MCF 10A (cell line): ENCODE measurements at regions of chr1 and their contacts with region 1.

Region 1: DNA sequence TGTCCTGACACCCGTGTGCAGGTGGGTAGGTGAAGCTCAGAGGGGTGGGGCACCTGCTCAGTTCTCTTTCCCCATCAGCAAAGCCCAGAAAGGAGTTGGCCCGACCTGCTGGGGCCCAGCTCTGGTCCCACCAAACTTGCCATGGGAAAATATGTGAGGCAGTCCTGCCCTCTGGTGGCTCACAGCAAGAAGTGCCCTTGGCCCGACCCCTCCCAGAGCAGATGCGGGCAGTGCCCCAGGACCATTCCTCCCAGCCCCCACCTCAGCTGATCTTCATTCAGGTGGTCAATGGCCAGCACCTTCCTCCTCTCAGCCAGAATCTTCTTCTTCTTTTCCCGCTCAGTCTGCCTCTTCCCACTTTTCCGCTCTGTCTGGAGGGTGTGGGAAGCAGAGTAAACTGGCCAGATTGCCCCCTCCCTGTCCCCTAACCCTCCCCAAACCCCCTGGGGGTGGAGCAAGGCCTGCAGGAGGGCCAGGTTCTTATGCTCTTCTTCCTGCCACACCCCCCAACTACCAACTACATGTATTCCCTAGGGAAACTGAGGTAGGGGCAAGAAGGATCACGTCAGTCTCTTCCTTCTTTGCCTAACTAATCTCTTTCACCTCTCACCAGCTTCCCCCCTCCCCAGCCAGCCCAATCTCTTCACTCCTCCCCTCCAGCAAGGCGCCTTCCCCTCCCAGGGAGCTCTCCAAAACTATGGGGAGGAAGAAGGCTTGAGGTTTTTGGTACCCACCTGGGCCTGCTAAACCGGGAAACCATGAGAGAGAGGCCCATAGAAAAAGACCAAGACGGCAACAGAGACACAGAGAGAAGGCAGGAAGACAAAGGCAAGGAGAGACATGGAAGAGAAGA is 15.6 kb downstream of the TNNT2 start:
- DNase-seq: peak; percentile 82
- H3K4me3 Mint-ChIP-seq: no peak overlapping the region
- H3K27ac Mint-ChIP-seq: no peak overlapping the region
- H3K4me1 Mint-ChIP-seq: peaks cover 24% of the 10 kb centered on the region
- H3K27me3 Mint-ChIP-seq: peaks cover 8% of the 10 kb centered on the region
- CTCF ChIP-seq: peak; percentile 100

Region 2: GRCh38 chr1:200982071-200982995 is 379.5 kb before region 1 on chr1:
- CTCF ChIA-PET with region 1: no interaction called
- POLR2A ChIA-PET with region 1: no interaction called
- intact Hi-C with region 1: no loop called
- DNase-seq: no peak
- H3K4me3 Mint-ChIP-seq: no peak overlapping the region
- H3K27ac Mint-ChIP-seq: no peak overlapping the region
- H3K4me1 Mint-ChIP-seq: no peaks in the 10 kb centered on the region
- H3K27me3 Mint-ChIP-seq: no peaks in the 10 kb centered on the region
- CTCF ChIP-seq: no peak

Region 3: DNA sequence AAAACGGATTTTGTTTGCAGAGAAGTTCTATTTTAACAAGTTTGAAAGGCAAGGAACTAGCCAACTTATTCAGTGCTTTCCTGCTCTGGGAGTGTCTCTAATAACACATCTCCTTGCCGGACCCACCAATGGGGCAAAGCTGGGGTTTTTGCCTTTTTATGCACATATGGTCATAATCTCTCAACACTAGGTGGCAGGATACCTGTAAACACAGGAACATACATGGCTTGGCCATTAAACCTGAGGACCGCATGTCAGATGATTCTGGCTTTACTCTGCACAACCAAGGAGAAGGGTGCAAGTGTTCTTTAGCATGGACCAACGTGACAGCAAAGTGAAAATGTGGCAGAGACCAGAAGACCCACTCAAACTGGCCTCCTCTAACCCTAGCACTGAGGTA is 212.5 kb before region 1 on chr1:
- CTCF ChIA-PET with region 1: interaction called, 87 read pairs
- POLR2A ChIA-PET with region 1: no interaction called
- intact Hi-C with region 1: loop called (anchors 1 kb)
- DNase-seq: peak; percentile 80
- H3K4me3 Mint-ChIP-seq: no peak overlapping the region
- H3K27ac Mint-ChIP-seq: no peak overlapping the region
- H3K4me1 Mint-ChIP-seq: peaks cover 5% of the 10 kb centered on the region
- H3K27me3 Mint-ChIP-seq: no peaks in the 10 kb centered on the region
- CTCF ChIP-seq: peak; percentile 78

Region 4: DNA sequence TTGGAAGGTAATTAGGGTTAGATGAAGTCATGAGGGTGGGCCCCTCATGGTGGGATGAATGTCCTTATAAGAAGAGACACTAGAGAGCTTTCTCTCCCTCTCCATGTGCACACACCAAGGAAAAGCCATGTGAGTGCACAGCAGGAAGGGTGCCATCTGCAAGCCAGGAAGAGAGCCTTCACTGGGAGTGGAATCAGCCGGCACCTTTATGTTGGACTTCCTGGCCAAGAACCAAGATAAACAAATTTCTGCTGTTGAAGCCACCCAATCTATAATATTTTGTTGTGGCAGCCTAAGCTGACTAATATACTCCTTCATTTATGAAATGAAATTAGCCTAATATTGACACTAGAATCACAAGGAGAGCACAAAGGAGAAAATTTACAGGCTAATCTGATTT is 116.8 kb before region 1 on chr1:
- CTCF ChIA-PET with region 1: interaction called, 550 read pairs
- POLR2A ChIA-PET with region 1: no interaction called
- intact Hi-C with region 1: no loop called
- DNase-seq: no peak
- H3K4me3 Mint-ChIP-seq: no peak overlapping the region
- H3K27ac Mint-ChIP-seq: no peak overlapping the region
- H3K4me1 Mint-ChIP-seq: peaks cover 7% of the 10 kb centered on the region
- H3K27me3 Mint-ChIP-seq: peaks cover 33% of the 10 kb centered on the region
- CTCF ChIP-seq: no peak

Region 5: DNA sequence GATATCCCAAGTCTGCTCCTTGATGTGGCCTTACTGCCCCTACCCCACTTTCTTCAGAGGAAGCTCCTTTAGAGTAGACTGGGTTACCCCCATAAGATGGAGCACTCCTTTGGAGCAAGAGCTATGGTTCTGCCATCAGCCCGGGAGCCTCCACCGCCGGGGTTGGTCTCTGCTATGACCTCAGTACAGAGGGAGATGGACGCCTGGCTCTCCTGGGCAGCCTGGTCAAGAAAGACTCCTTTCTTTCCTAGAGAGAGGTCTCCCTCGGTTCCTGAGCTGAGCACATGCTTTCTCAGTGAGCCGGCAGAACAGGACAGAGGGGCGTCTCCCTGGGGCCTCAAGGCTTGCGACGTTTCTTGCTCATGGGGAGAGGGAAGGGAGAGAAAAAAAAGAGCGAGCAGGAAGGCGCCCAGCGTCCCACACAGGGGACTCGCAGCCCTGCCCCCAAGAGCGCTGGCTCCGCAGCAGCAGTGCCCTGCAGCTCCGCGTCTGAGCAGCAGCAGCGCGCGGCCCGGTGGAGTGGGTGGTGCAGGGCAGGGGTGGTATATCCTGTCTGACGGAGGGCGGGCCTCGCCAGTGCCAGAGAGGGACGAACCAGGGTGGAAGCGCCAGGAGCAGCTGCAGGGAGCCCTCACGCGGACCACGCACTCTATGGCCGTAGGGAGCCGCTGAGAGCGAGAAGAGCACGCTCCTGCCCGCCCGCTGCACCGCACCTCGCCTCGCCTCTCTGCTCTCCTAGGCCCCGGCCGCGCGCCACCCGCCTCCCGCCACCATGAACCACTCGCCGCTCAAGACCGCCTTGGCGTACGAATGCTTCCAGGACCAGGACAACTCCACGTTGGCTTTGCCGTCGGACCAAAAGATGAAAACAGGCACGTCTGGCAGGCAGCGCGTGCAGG is 78.7 kb before region 1 on chr1 and contains the start of gene PKP1:
- CTCF ChIA-PET with region 1: interaction called, 88 read pairs
- POLR2A ChIA-PET with region 1: interaction called, 15 read pairs
- intact Hi-C with region 1: no loop called
- DNase-seq: no peak
- H3K4me3 Mint-ChIP-seq: no peak within 1 kb of the TSS
- H3K27ac Mint-ChIP-seq: peak within 1 kb of the TSS; percentile 40
- H3K4me1 Mint-ChIP-seq: peaks cover 22% of the 10 kb centered on the region
- H3K27me3 Mint-ChIP-seq: no peaks in the 10 kb centered on the region
- CTCF ChIP-seq: no peak
- total RNA-seq, gene PKP1: 0.30 and 0.32 TPM in 2 replicates

Region 6: DNA sequence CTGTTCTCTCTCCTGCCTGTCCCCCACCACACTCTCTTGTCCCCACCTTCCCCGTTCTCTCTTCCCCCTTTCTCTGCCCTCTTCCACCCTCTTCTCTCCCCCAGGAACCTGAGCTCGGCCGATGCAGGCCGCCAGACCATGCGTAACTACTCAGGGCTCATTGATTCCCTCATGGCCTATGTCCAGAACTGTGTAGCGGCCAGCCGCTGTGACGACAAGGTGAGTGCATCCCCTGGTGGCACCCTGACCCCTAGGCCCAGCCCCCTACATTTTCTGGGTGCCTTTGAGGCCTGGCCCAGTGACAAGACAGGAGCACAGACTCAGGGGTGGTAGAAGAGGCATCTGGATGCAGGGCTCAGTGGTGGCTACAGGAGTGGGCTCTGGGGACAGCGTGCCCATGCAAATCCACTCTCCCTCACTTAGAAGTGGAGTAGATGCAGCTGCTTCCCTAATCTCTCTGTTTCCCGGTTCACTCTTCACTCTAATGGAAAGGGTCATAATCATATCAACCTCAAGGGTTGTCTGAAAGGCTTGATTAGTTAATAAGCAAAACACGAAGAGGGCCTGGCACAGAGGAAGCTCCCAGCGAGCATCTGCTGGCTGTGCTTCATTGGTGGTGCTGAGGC is 41.6 kb before region 1 on chr1:
- CTCF ChIA-PET with region 1: interaction called, 30 read pairs
- POLR2A ChIA-PET with region 1: no interaction called
- intact Hi-C with region 1: no loop called
- DNase-seq: no peak
- H3K4me3 Mint-ChIP-seq: no peak overlapping the region
- H3K27ac Mint-ChIP-seq: no peak overlapping the region
- H3K4me1 Mint-ChIP-seq: peaks cover 24% of the 10 kb centered on the region
- H3K27me3 Mint-ChIP-seq: no peaks in the 10 kb centered on the region
- CTCF ChIP-seq: no peak

Region 7: GRCh38 chr1:201376464-201377374 is 14.8 kb after region 1 on chr1:
- CTCF ChIA-PET with region 1: interaction called, 45 read pairs
- POLR2A ChIA-PET with region 1: interaction called, 4 read pairs
- intact Hi-C with region 1: no loop called
- DNase-seq: peak; percentile 80
- H3K4me3 Mint-ChIP-seq: no peak overlapping the region
- H3K27ac Mint-ChIP-seq: no peak overlapping the region
- H3K4me1 Mint-ChIP-seq: no peaks in the 10 kb centered on the region
- H3K27me3 Mint-ChIP-seq: peaks cover 37% of the 10 kb centered on the region
- CTCF ChIP-seq: peak; percentile 67